MCF 10A (cell line): ENCODE measurements at regions of chr15 and their contacts with region 1.

Region 1: GRCh38 chr15:79596051-79596507 is 163.9 kb downstream of the MINAR1 start:
- DNase-seq: peak; percentile 95
- H3K4me3 Mint-ChIP-seq: no peak overlapping the region
- H3K27ac Mint-ChIP-seq: no peak overlapping the region
- H3K4me1 Mint-ChIP-seq: no peaks in the 10 kb centered on the region
- H3K27me3 Mint-ChIP-seq: peaks cover 47% of the 10 kb centered on the region
- CTCF ChIP-seq: peak; percentile 84

Region 2: DNA sequence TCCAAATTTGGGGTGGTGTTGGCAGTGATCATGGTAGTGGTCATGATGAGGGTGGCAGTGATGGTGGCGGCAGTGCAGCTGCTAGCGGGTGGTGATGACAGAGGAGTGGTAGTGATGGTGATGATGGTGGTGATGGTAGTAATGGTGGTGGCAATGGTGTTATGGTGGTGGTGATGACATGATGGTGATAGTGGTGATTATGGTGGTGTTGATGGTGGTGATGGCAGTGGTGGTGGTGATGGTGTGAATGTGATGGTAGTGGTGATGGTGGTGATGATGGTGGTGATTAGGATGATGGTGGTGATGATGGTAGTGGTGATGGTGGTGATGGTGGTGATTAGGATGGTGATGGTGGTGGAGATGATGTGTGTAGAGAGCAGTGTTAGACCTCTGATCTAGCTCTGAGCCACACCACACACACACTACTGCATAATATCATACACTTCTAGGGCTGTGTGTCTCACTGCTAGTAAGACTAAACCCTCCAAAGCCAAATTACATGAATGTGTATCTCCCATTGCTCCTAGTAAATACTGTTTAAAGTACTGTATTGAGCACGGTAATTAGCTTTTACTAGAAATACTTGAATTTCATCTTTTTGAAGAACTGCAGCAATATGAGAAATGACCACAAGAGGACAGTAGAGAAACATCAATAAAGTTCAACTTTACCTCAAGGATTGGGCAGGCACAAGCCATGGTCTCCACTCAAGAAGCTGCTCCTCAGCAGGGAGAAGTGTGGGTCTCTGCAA is 256.3 kb before region 1 on chr15:
- CTCF ChIA-PET with region 1: interaction called, 7 read pairs
- POLR2A ChIA-PET with region 1: no interaction called
- intact Hi-C with region 1: loop called (anchors 1 kb)
- DNase-seq: peak; percentile 47
- H3K4me3 Mint-ChIP-seq: no peak overlapping the region
- H3K27ac Mint-ChIP-seq: no peak overlapping the region
- H3K4me1 Mint-ChIP-seq: no peaks in the 10 kb centered on the region
- H3K27me3 Mint-ChIP-seq: no peaks in the 10 kb centered on the region
- CTCF ChIP-seq: peak; percentile 72

Region 3: GRCh38 chr15:79394231-79394630 is 201.8 kb before region 1 on chr15:
- CTCF ChIA-PET with region 1: interaction called, 11 read pairs
- POLR2A ChIA-PET with region 1: no interaction called
- intact Hi-C with region 1: no loop called
- DNase-seq: peak; percentile 38
- H3K4me3 Mint-ChIP-seq: no peak overlapping the region
- H3K27ac Mint-ChIP-seq: no peak overlapping the region
- H3K4me1 Mint-ChIP-seq: no peaks in the 10 kb centered on the region
- H3K27me3 Mint-ChIP-seq: no peaks in the 10 kb centered on the region
- CTCF ChIP-seq: no peak

Region 4: GRCh38 chr15:79450648-79451047 is 145.4 kb before region 1 on chr15:
- CTCF ChIA-PET with region 1: interaction called, 3 read pairs
- POLR2A ChIA-PET with region 1: no interaction called
- intact Hi-C with region 1: loop called (anchors 1 kb)
- DNase-seq: peak; percentile 4
- H3K4me3 Mint-ChIP-seq: no peak overlapping the region
- H3K27ac Mint-ChIP-seq: no peak overlapping the region
- H3K4me1 Mint-ChIP-seq: no peaks in the 10 kb centered on the region
- H3K27me3 Mint-ChIP-seq: no peaks in the 10 kb centered on the region
- CTCF ChIP-seq: no peak

Region 5: DNA sequence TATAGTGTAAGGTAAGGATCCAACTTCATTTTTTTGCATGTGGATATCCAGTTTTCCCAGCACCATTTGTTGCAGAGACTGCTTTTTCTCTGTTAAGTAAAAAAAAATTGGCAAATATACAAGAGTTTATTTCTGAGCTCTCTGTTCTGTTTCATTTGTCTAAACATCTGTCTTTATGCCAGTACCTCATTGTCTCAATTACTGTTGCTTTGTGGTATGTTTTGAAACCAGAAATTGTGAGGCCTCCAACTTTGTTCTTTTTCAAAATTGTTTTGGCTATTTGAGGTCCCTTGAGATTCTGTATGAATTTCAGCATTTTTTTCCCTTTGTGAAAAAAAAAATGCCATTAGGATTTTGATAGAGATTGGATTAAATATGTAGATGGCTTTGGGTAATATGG is 13.4 kb before region 1 on chr15:
- CTCF ChIA-PET with region 1: interaction called, 12 read pairs
- POLR2A ChIA-PET with region 1: no interaction called
- intact Hi-C with region 1: no loop called
- DNase-seq: no peak
- H3K4me3 Mint-ChIP-seq: no peak overlapping the region
- H3K27ac Mint-ChIP-seq: no peak overlapping the region
- H3K4me1 Mint-ChIP-seq: no peaks in the 10 kb centered on the region
- H3K27me3 Mint-ChIP-seq: peaks cover 73% of the 10 kb centered on the region
- CTCF ChIP-seq: no peak